MCF 10A (cell line): ENCODE measurements at regions of chr5 and their contacts with region 1.

Region 1: GRCh38 chr5:135191084-135191826 is 157.2 kb upstream of the PITX1 start:
- DNase-seq: peak; percentile 90
- H3K4me3 Mint-ChIP-seq: peak overlapping the region; percentile 76
- H3K27ac Mint-ChIP-seq: no peak overlapping the region
- H3K4me1 Mint-ChIP-seq: peaks cover 7% of the 10 kb centered on the region
- H3K27me3 Mint-ChIP-seq: no peaks in the 10 kb centered on the region
- CTCF ChIP-seq: peak; percentile 99

Region 2: DNA sequence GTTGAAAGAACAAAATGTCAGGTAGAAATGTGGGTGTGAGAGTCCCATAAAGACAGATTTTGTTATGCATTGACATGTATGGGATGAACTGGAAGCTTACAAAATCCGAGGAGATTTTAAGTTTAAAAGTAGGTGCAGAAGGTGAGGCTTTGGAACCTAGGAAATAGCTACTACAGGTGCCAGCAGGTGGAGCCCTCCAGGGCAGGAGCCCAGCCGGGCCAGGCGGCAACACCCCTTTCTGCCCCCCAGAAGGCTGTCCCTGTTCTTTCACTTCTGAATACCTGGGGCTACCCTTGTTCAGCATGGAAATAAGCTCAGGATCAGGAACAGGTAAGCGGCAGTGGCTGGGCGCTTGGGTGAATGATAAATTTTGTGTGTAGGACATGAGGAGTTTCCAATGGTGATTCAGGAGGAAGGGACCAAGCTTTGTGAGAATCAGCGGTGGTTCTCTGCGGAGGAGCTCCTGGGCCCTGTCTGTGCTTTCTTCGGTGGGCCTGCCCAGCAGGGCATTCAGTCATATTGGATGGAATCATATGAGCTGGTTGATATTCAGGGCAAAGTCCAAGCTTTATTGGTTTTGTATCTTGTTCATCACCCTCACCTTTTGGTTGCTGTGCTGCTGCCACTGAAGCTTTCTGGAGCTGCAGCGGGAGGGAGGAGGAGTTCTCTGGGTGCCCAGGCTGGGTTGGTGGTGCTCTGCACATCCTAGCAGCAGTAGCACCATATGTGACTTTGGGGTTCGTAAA is 274.0 kb before region 1 on chr5:
- CTCF ChIA-PET with region 1: interaction called, 53 read pairs
- POLR2A ChIA-PET with region 1: interaction called, 3 read pairs
- intact Hi-C with region 1: loop called (anchors 1 kb)
- DNase-seq: no peak
- H3K4me3 Mint-ChIP-seq: no peak overlapping the region
- H3K27ac Mint-ChIP-seq: no peak overlapping the region
- H3K4me1 Mint-ChIP-seq: no peaks in the 10 kb centered on the region
- H3K27me3 Mint-ChIP-seq: no peaks in the 10 kb centered on the region
- CTCF ChIP-seq: peak; percentile 33

Region 3: GRCh38 chr5:135013947-135014570 is 177.2 kb before region 1 on chr5:
- CTCF ChIA-PET with region 1: interaction called, 11 read pairs
- POLR2A ChIA-PET with region 1: interaction called, 3 read pairs
- intact Hi-C with region 1: loop called (anchors 1 kb)
- DNase-seq: no peak
- H3K4me3 Mint-ChIP-seq: no peak overlapping the region
- H3K27ac Mint-ChIP-seq: no peak overlapping the region
- H3K4me1 Mint-ChIP-seq: no peaks in the 10 kb centered on the region
- H3K27me3 Mint-ChIP-seq: no peaks in the 10 kb centered on the region
- CTCF ChIP-seq: no peak

Region 4: DNA sequence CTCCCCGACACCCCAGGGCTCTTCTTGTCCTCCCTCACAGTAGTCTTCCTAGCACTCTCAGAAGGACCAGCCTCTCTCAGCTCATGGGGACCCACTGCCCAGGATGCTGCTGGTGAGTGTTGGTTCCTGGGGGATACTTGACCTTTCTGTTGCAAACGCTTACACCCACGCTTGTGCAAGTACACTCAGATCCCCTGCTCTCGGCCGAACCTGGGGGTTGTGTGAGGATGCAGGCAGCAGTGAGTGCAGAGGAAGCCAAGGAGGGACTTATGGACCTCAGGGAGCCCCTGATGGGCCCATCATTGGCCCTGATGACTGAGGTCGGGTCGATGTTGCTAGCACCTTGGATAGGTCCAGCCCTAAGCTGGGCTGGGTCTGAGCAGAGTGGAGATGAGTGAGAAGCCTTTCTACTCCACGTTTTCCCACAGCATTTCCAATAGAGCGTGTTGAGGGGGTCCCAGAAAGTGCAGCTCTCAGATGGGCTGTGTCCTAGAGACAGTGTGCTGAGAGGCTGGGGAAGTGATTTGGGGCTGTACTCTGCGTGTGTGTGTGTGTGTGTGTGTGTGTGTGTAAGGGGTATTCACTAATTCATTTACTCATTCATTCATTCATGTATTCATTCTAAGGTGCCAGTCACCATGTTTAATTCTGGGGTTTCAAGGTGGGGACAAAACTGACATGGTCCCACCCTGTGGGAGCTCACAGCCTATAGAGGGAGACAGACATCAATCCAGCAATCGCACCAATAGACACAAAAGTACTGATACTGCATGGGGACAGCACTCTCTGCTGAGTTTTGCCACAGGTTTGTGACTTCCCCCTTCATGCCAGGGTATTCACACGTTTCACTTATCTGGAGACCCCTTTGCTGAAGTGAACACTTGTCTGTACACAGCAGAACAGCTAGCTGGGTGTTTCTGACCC is 132.0 kb before region 1 on chr5:
- CTCF ChIA-PET with region 1: interaction called, 5 read pairs
- POLR2A ChIA-PET with region 1: interaction called, 3 read pairs
- intact Hi-C with region 1: loop called (anchors 1 kb)
- DNase-seq: peak; percentile 25
- H3K4me3 Mint-ChIP-seq: no peak overlapping the region
- H3K27ac Mint-ChIP-seq: no peak overlapping the region
- H3K4me1 Mint-ChIP-seq: no peaks in the 10 kb centered on the region
- H3K27me3 Mint-ChIP-seq: no peaks in the 10 kb centered on the region
- CTCF ChIP-seq: peak; percentile 26

Region 5: DNA sequence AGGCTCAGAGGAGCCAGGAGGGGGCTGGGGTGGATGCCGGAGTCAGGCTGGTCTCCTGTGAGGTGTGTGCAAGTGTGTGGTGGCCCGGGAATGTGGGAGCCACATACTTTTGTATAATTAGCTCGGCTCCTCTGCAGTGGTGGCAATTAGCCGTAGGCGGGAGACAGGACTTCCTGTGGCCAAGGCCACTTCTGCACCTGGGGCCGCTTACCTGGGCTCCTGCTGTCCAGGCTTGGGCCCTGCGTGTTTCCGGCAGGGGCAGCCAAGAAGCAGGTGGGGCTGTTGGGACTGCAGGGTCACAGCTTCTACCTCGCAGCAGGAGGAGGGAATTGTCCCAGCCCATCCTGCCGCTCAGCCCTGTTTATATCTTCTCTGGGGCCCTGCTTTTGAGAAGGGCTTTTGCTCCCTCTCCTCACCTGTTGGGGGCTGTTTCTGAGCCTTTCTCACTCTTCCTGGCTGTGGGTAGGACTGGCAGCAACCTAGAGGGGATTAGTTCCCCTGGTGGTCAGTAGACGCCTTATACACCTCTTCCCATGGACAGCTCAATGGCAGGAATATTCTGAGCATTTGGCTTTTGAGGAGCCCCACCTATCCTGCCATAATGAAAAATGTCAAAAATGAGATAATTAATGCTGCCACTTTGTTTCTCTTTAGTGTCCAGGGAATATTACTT is 11.8 kb before region 1 on chr5:
- CTCF ChIA-PET with region 1: interaction called, 15 read pairs
- POLR2A ChIA-PET with region 1: interaction called, 3 read pairs
- intact Hi-C with region 1: no loop called
- DNase-seq: no peak
- H3K4me3 Mint-ChIP-seq: no peak overlapping the region
- H3K27ac Mint-ChIP-seq: no peak overlapping the region
- H3K4me1 Mint-ChIP-seq: no peaks in the 10 kb centered on the region
- H3K27me3 Mint-ChIP-seq: no peaks in the 10 kb centered on the region
- CTCF ChIP-seq: no peak

Region 6: GRCh38 chr5:135263022-135263668 is 71.9 kb after region 1 on chr5:
- CTCF ChIA-PET with region 1: interaction called, 11 read pairs
- POLR2A ChIA-PET with region 1: no interaction called
- intact Hi-C with region 1: no loop called
- DNase-seq: peak; percentile 64
- H3K4me3 Mint-ChIP-seq: no peak overlapping the region
- H3K27ac Mint-ChIP-seq: no peak overlapping the region
- H3K4me1 Mint-ChIP-seq: no peaks in the 10 kb centered on the region
- H3K27me3 Mint-ChIP-seq: no peaks in the 10 kb centered on the region
- CTCF ChIP-seq: no peak

Region 7: DNA sequence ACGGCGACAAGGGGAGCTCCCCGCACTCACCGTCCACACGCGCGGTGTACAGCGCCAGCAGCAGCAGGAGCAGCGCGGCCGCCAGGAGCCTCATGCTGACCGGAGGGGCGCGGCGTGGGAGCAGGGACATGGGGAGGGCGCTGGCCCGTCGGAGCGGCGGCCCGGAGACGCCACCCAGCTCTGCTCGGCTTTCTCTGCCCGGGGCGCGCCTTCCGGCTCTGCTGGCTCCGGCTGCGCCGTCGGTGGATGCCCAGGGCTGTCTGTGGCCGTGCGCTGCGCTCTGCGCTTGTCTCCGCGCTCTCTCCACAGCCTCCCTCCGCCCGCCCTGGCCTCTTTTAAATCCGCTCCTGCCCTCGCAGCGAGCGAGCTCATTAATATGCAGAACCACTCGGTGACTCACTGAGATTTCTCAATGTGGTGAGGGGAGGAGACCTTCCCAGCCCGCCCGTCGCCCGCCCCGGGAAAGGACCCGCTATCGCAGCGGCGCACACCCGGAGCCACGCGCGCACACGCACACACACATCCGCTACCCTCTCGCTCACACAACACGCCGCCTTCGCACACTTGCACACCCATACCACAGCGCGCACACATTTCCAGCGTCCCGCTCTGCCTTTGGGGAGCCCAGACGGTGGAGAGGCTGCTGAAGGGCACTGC is 387.6 kb after region 1 on chr5 and contains the start of gene CXCL14:
- CTCF ChIA-PET with region 1: no interaction called
- POLR2A ChIA-PET with region 1: no interaction called
- intact Hi-C with region 1: no loop called
- DNase-seq: peak; percentile 95
- H3K4me3 Mint-ChIP-seq: peak within 1 kb of the TSS; percentile 69
- H3K27ac Mint-ChIP-seq: no peak within 1 kb of the TSS
- H3K4me1 Mint-ChIP-seq: no peaks in the 10 kb centered on the region
- H3K27me3 Mint-ChIP-seq: peaks cover 50% of the 10 kb centered on the region
- CTCF ChIP-seq: no peak
- total RNA-seq, gene CXCL14: not detected in 2 replicates

Region 8: GRCh38 chr5:135930949-135931295 is 739.7 kb after region 1 on chr5:
- CTCF ChIA-PET with region 1: no interaction called
- POLR2A ChIA-PET with region 1: no interaction called
- intact Hi-C with region 1: no loop called
- DNase-seq: no peak
- H3K4me3 Mint-ChIP-seq: no peak overlapping the region
- H3K27ac Mint-ChIP-seq: no peak overlapping the region
- H3K4me1 Mint-ChIP-seq: no peaks in the 10 kb centered on the region
- H3K27me3 Mint-ChIP-seq: peaks cover 71% of the 10 kb centered on the region
- CTCF ChIP-seq: no peak

Region 9: DNA sequence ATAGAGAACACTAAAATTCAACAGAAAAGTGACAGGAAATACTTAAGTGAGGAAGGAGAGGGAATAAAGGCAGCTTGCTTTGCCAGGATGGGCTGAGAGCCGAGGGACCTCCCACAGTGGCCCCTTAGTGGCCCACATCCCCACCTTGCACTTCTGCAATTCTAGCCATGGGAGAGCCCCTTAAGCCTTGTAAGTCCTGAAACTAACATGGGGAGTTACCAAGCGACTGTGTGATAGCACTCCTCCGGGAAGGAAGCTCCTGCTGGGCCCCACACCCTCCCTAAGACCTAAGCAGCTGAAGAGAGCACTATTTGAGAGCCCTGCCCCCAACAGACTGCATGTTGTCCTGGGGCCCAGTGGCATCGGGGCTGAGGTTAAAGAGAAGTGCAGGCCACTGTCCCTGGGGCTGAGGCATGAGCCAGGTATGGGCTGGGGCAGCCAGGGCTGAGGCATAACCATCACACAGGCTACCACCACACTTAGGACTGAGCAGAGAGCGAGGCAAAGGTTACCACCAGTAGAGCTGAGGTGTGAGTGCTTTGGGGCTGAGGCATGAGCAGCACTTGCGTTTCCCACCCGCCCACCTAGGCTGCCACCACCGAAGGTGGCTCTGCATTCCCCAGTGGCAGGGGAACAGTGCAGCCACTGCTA is 1475.8 kb after region 1 on chr5:
- CTCF ChIA-PET with region 1: no interaction called
- POLR2A ChIA-PET with region 1: no interaction called
- intact Hi-C with region 1: no loop called
- DNase-seq: no peak
- H3K4me3 Mint-ChIP-seq: no peak overlapping the region
- H3K27ac Mint-ChIP-seq: no peak overlapping the region
- H3K4me1 Mint-ChIP-seq: no peaks in the 10 kb centered on the region
- H3K27me3 Mint-ChIP-seq: peaks cover 41% of the 10 kb centered on the region
- CTCF ChIP-seq: no peak